CD8-positive, alpha-beta T cell (primary cell): ENCODE measurements at regions of chr9 and their contacts with region 1.

Region 1: DNA sequence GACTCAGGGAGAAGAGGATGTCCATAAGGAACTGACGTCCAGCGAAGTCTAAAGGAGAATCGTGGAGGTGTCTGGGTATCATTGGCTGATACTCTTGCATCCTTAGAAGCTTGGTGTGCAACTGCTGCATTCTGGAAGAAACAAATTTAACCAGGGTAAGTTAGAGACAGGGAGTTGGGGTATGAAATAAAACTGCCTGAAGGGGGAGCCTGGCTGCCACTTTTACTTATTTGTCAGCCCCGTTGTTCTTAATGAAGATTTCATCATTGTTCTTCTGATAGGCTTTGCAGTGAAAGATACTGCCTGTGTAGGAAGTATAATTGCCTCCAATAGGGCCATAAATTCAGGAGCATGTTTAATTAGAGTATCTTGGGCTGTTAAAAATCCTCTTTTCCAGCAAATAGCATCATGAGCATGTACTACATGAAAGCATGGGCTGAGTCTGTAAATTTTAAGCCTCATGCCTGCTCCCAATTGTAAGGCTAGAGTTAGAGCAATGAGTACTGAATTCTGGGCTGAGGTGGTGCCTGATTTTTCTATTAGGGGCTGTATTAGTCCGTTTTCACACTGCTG is 1264.5 kb upstream of the ACO1 start:
- DNase-seq: peak; percentile 12 to 69 (median 30)
- ATAC-seq: peak; percentile 74
- H3K4me3 ChIP-seq: no peak overlapping the region
- H3K4me3 Mint-ChIP-seq: no peak overlapping the region
- H3K27ac ChIP-seq: no peak overlapping the region
- H3K27ac Mint-ChIP-seq: no peak overlapping the region
- H3K4me1 ChIP-seq: no peaks in the 10 kb centered on the region
- H3K4me1 Mint-ChIP-seq: peaks cover 8% of the 10 kb centered on the region
- H3K27me3 ChIP-seq: no peaks in the 10 kb centered on the region
- H3K27me3 Mint-ChIP-seq: peaks cover 2% of the 10 kb centered on the region
- CTCF ChIP-seq: peak; percentile 66

Region 2: DNA sequence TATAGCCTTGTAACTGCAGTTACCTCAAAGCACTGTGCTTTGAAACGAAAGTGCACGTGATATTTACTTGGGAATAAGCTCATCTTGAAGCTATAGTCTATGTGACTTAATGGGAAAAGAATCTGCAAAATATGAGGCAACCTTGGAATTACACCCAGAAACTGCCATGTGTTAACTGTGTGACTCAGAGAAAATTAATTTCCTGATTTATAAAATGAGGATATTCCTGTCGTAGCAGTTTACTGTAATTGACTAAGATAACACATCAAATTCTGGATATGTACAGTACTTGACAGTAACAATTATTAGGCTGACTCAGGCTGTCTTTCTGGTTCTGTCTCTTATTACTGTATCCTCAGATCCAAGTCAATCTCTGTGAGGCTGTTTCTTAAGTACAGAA is 184.6 kb after region 1 on chr9:
- CTCF ChIA-PET with region 1: interaction called, 10 read pairs
- POLR2A ChIA-PET with region 1: interaction called, 5 read pairs
- intact Hi-C with region 1: loop called (anchors 1 to 5 kb)
- DNase-seq: no peak
- ATAC-seq: no peak
- H3K4me3 ChIP-seq: no peak overlapping the region
- H3K4me3 Mint-ChIP-seq: no peak overlapping the region
- H3K27ac ChIP-seq: no peak overlapping the region
- H3K27ac Mint-ChIP-seq: no peak overlapping the region
- H3K4me1 ChIP-seq: peaks cover 5% of the 10 kb centered on the region
- H3K4me1 Mint-ChIP-seq: peaks cover 28% of the 10 kb centered on the region
- H3K27me3 ChIP-seq: no peaks in the 10 kb centered on the region
- H3K27me3 Mint-ChIP-seq: no peaks in the 10 kb centered on the region
- CTCF ChIP-seq: no peak

Region 3: GRCh38 chr9:31542384-31543055 is 422.6 kb after region 1 on chr9:
- CTCF ChIA-PET with region 1: interaction called, 7 read pairs
- POLR2A ChIA-PET with region 1: no interaction called
- intact Hi-C with region 1: loop called (anchors 5 kb)
- DNase-seq: peak in 2 of 9 experiments; percentile 44 to 45
- ATAC-seq: peak; percentile 55
- H3K4me3 ChIP-seq: no peak overlapping the region
- H3K4me3 Mint-ChIP-seq: peak overlapping the region; percentile 16
- H3K27ac ChIP-seq: no peak overlapping the region
- H3K27ac Mint-ChIP-seq: peak overlapping the region; percentile 56
- H3K4me1 ChIP-seq: no peaks in the 10 kb centered on the region
- H3K4me1 Mint-ChIP-seq: peaks cover 17% of the 10 kb centered on the region
- H3K27me3 ChIP-seq: no peaks in the 10 kb centered on the region
- H3K27me3 Mint-ChIP-seq: no peaks in the 10 kb centered on the region
- CTCF ChIP-seq: no peak

Region 4: GRCh38 chr9:31799953-31800609 is 680.1 kb after region 1 on chr9:
- CTCF ChIA-PET with region 1: interaction called, 15 read pairs
- POLR2A ChIA-PET with region 1: no interaction called
- intact Hi-C with region 1: loop called (anchors 1 kb)
- DNase-seq: peak in 2 of 9 experiments; percentile 17 to 31
- ATAC-seq: no peak
- H3K4me3 ChIP-seq: no peak overlapping the region
- H3K4me3 Mint-ChIP-seq: no peak overlapping the region
- H3K27ac ChIP-seq: no peak overlapping the region
- H3K27ac Mint-ChIP-seq: no peak overlapping the region
- H3K4me1 ChIP-seq: no peaks in the 10 kb centered on the region
- H3K4me1 Mint-ChIP-seq: peaks cover 13% of the 10 kb centered on the region
- H3K27me3 ChIP-seq: no peaks in the 10 kb centered on the region
- H3K27me3 Mint-ChIP-seq: no peaks in the 10 kb centered on the region
- CTCF ChIP-seq: peak; percentile 50

Region 5: GRCh38 chr9:32069969-32070368 is 950.0 kb after region 1 on chr9:
- CTCF ChIA-PET with region 1: no interaction called
- POLR2A ChIA-PET with region 1: no interaction called
- intact Hi-C with region 1: loop called in 1 of 2 experiments (anchors 5 kb)
- DNase-seq: no peak
- ATAC-seq: no peak
- H3K4me3 ChIP-seq: no peak overlapping the region
- H3K4me3 Mint-ChIP-seq: no peak overlapping the region
- H3K27ac ChIP-seq: no peak overlapping the region
- H3K27ac Mint-ChIP-seq: no peak overlapping the region
- H3K4me1 ChIP-seq: no peaks in the 10 kb centered on the region
- H3K4me1 Mint-ChIP-seq: no peaks in the 10 kb centered on the region
- H3K27me3 ChIP-seq: no peaks in the 10 kb centered on the region
- H3K27me3 Mint-ChIP-seq: no peaks in the 10 kb centered on the region
- CTCF ChIP-seq: no peak

Region 6: DNA sequence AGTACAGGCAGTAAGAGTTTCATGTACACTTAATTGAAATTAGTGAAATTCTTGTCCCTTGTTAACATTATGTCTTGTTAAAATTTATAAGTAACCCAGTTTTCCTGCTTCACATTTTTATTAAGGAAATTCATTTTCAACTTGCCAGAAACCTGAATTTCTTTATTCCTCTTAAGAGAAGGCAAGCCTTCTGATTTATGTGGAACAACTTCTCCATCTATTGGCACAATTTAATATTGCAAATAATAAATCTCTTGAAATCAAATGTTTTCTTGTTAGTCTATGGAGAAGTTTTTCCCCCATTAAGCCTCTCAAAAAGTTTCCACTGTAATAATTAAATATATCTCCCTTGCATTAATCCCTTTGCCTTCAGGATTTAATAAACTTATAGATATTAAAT is 1230.7 kb after region 1 on chr9:
- CTCF ChIA-PET with region 1: no interaction called
- POLR2A ChIA-PET with region 1: no interaction called
- intact Hi-C with region 1: loop called (anchors 1 to 10 kb)
- DNase-seq: peak in 2 of 9 experiments; percentile 17 to 27
- ATAC-seq: no peak
- H3K4me3 ChIP-seq: no peak overlapping the region
- H3K4me3 Mint-ChIP-seq: no peak overlapping the region
- H3K27ac ChIP-seq: no peak overlapping the region
- H3K27ac Mint-ChIP-seq: no peak overlapping the region
- H3K4me1 ChIP-seq: no peaks in the 10 kb centered on the region
- H3K4me1 Mint-ChIP-seq: no peaks in the 10 kb centered on the region
- H3K27me3 ChIP-seq: no peaks in the 10 kb centered on the region
- H3K27me3 Mint-ChIP-seq: peaks cover 5% of the 10 kb centered on the region
- CTCF ChIP-seq: peak; percentile 44